ENCODE measurements at regions of chr4 and their contacts with region 1.

Region 1: GRCh38 chr4:11424000-11424399 is 4.7 kb downstream of the HS3ST1 start:
- DNase-seq: peak; percentile 31
- H3K4me3 Mint-ChIP-seq: no peak overlapping the region
- H3K27ac Mint-ChIP-seq: no peak overlapping the region
- H3K4me1 Mint-ChIP-seq: peaks cover 13% of the 10 kb centered on the region
- H3K27me3 Mint-ChIP-seq: peaks cover 39% of the 10 kb centered on the region

Region 2: GRCh38 chr4:10582059-10582686 is 841.8 kb before region 1 on chr4:
- CTCF ChIA-PET with region 1: interaction called, 10 read pairs
- DNase-seq: peak; percentile 48
- H3K4me3 Mint-ChIP-seq: no peak overlapping the region
- H3K27ac Mint-ChIP-seq: no peak overlapping the region
- H3K4me1 Mint-ChIP-seq: peaks cover 28% of the 10 kb centered on the region
- H3K27me3 Mint-ChIP-seq: peaks cover under 1% of the 10 kb centered on the region

Region 3: GRCh38 chr4:11228546-11228945 is 195.5 kb before region 1 on chr4:
- CTCF ChIA-PET with region 1: no interaction called
- DNase-seq: no peak
- H3K4me3 Mint-ChIP-seq: no peak overlapping the region
- H3K27ac Mint-ChIP-seq: no peak overlapping the region
- H3K4me1 Mint-ChIP-seq: no peaks in the 10 kb centered on the region
- H3K27me3 Mint-ChIP-seq: no peaks in the 10 kb centered on the region

Region 4: GRCh38 chr4:11446155-11446811 is 22.3 kb after region 1 on chr4:
- CTCF ChIA-PET with region 1: no interaction called
- DNase-seq: no peak
- H3K4me3 Mint-ChIP-seq: no peak overlapping the region
- H3K27ac Mint-ChIP-seq: no peak overlapping the region
- H3K4me1 Mint-ChIP-seq: no peaks in the 10 kb centered on the region
- H3K27me3 Mint-ChIP-seq: no peaks in the 10 kb centered on the region